ENCODE measurements at regions of chr19 and their contacts with region 1.

Region 1: DNA sequence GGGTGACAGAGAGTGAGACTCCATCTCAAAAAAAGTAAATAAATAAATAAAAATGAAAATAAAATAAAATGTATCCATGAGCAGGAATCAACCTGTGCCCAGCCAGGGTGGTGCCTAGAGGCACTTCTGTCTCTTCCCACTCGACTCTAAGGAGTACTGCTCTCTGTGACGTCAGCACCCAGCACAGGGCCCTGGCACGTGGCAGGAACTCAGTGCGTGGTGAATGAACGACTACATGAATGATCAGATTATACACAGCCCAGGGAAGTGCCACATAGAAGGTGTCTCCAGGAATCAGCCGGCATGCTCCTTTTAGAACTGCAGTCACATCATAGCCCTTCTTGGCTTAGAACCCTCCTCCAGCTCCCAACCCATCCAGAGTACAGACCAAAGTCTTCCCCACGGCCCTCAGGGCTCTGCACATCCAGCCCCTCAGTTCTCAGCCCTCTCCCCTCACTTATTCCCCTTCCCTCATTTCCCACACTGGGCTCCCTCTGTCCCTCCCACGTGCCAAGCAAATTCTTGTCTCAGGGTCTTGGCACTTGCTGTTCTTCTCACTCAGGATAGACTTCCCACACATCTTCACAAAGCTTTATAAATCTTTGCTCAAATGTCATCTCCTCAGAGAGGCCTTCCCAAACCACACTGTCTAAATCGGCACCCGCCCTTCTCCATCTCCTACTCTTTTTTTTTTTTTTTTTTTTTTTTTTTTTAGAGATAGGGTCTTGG is 4.2 kb downstream of the CLIP3 start:
- DNase-seq: no peak
- ATAC-seq: no peak
- H3K4me3 ChIP-seq: no peak overlapping the region
- H3K27ac ChIP-seq: no peak overlapping the region
- H3K4me1 ChIP-seq: peaks cover 5% of the 10 kb centered on the region; the same call in 1 of the 2 replicates
- H3K27me3 ChIP-seq: no peaks in the 10 kb centered on the region
- CTCF ChIP-seq: no peak
- POLR2A ChIP-seq: no peak
- RAD21 ChIP-seq: no peak

Region 2: DNA sequence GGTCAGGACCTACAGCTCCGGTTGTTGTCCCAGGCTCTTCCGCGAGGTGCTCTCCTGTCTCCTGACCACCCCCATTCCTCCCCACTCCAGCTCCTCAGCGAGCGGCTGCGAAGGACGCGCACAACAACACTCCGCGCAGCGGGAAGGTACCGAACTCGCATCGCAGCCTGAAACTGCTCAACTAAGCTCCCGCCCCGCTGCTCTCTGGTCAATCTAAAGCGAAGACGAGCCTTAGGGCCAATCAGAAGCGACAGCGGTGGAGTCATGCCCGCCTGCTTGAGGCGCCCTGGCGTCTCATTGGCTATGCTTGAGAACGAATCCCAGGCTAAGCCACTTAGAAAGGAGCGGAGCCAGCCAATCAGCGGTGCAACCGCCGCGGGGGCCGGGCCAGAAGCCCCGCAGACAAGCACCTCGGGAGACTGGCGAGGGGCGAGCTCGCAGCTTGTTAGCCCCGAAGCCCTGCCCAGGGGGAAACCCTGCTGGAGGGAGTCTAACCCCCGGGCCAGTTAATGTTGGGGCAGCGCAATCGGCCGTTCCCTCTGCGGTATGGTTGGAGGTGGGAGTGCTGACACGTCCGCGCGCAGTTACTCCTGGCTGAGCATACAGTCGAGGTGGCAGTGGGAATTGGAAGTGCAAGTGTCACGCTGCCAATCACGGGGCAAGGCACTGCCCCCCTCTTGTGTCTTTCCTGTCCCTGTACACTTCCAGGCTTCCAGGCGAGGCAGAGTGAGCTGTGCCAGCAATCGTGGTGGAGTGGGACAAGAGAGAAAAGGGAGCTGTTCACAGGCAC is 326.1 kb before region 1 on chr19:
- CTCF ChIA-PET with region 1: no interaction called
- POLR2A ChIA-PET with region 1: no interaction called
- dilution Hi-C with region 1: no loop called
- in situ Hi-C with region 1: no loop called
- intact Hi-C with region 1: no loop called
- DNase-seq: peak; percentile 97
- ATAC-seq: peak; percentile 100
- H3K4me3 ChIP-seq: peak overlapping the region; percentile 49
- H3K27ac ChIP-seq: no peak overlapping the region
- H3K4me1 ChIP-seq: no peaks in the 10 kb centered on the region
- H3K27me3 ChIP-seq: no peaks in the 10 kb centered on the region
- CTCF ChIP-seq: no peak
- POLR2A ChIP-seq: no peak
- RAD21 ChIP-seq: no peak

Region 3: GRCh38 chr19:35995048-35995993 is 33.2 kb before region 1 on chr19 and contains the start of gene SDHAF1:
- CTCF ChIA-PET with region 1: no interaction called
- POLR2A ChIA-PET with region 1: interaction called, 16 read pairs
- dilution Hi-C with region 1: no loop called
- in situ Hi-C with region 1: no loop called
- intact Hi-C with region 1: no loop called
- DNase-seq: peak; percentile 90
- ATAC-seq: peak; percentile 91
- H3K4me3 ChIP-seq: peak within 1 kb of the TSS; percentile 71
- H3K27ac ChIP-seq: peak within 1 kb of the TSS; percentile 67
- H3K4me1 ChIP-seq: peaks cover 2% of the 10 kb centered on the region; the same call in 1 of the 2 replicates
- H3K27me3 ChIP-seq: no peaks in the 10 kb centered on the region
- CTCF ChIP-seq: no peak
- POLR2A ChIP-seq: no peak
- RAD21 ChIP-seq: no peak; the same call in 1 of the 2 replicates
- total RNA-seq, gene SDHAF1: 4.8 and 5.0 TPM in 2 replicates

Region 4: GRCh38 chr19:36060430-36060829 is 32.0 kb after region 1 on chr19:
- CTCF ChIA-PET with region 1: no interaction called
- POLR2A ChIA-PET with region 1: no interaction called
- dilution Hi-C with region 1: no loop called
- in situ Hi-C with region 1: no loop called
- intact Hi-C with region 1: no loop called
- DNase-seq: peak; percentile 63
- ATAC-seq: peak; percentile 97
- H3K4me3 ChIP-seq: no peak overlapping the region
- H3K27ac ChIP-seq: no peak overlapping the region
- H3K4me1 ChIP-seq: no peaks in the 10 kb centered on the region
- H3K27me3 ChIP-seq: no peaks in the 10 kb centered on the region
- CTCF ChIP-seq: peak; percentile 78
- POLR2A ChIP-seq: no peak
- RAD21 ChIP-seq: peak; percentile 83